Posterior cingulate gyrus (tissue), 11 donors: ENCODE measurements at regions of chr1 and their contacts with region 1.

Region 1: GRCh38 chr1:6613361-6614018 is at the start of gene PHF13:
- DNase-seq: peak; percentile 99 to 100 (median 100)

Region 2: DNA sequence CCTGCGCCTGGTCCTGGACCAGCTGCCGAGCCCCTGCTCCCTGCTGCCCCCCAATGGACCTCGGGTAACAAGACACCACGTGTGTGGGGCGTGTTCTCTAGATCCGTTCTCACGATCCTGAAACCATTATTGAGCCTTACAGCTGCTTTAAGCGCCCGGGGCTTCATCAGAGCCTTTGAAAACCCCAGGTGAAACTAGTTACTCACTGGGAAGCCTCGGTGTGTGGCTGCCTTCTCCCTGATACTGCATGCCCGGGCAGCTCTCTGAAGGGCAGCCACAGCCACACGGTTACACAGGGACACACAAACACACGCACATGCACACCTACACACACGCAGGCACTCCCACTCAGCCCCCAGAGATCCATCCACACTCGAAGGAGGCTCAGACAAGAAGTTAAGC is 199.0 kb before region 1 on chr1:
- intact Hi-C with region 1: no loop called
- DNase-seq: peak in 5 of 10 donors; percentile 24 to 83 (median 35)

Region 3: DNA sequence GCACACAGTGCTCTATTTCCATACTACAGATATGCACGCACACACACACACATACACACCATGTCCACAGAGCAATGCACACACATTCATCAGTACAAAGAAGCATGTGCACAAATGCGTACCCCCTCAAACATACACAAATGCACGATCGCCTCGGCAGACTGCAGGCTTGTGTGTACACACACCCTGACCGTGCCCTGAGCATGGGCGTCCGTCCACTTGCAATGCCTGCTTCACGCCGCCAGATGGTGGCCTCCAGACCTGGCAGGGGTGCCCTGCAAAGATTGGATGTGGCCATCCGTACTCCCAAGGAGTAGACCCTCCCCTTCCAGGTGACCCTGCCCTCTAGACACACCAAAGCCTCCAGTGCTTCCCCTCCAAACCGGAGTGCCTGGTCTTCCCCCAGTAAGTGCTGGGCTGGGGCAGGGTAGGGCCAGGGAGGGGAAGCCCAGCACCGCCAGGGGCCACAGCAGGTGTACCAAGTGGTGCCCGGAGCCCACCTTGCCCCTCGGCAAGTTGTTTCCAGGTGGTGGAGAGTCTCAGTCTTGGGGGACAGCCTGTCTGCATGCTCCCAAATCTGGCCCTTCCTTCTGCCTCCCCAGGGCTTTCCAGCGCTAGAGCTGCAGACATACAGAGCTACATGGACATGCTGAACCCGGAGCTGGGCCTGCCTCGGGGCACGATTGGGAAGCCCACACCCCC is 168.3 kb before region 1 on chr1:
- intact Hi-C with region 1: no loop called
- DNase-seq: peak in 4 of 10 donors; percentile 26 to 89 (median 27)

Region 4: DNA sequence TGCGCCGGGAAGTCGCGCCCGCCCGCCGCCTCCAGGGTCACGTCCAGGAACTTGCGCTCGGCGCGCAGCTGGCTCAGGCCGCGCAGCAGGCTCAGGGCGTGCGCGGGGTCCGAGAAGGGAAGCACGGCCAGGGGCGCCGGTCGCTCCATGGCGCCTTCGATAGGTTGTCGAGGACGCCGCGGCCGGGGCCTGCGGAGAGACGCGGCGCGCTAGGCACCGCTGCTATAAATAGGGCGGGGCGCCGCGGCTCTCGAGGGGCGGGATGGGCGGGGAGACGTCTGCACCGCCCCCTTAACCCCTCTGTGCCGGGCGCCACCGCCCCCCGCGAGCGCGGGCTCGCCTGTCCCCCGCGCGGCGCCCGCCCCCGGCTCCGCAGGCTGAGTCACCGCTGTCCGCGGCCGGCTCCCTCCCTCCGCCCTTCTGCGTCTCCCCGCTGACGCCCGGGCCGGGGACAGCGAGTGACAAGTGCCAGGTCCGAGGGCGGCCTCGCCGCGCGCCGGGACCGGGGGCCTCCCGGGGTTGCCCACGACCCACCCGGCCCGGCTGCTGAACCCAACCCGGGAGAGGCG is 10.7 kb before region 1 on chr1 and contains the start of gene KLHL21:
- intact Hi-C with region 1: loop called (anchors 1 kb)
- DNase-seq: peak; percentile 76 to 99 (median 90)

Region 5: DNA sequence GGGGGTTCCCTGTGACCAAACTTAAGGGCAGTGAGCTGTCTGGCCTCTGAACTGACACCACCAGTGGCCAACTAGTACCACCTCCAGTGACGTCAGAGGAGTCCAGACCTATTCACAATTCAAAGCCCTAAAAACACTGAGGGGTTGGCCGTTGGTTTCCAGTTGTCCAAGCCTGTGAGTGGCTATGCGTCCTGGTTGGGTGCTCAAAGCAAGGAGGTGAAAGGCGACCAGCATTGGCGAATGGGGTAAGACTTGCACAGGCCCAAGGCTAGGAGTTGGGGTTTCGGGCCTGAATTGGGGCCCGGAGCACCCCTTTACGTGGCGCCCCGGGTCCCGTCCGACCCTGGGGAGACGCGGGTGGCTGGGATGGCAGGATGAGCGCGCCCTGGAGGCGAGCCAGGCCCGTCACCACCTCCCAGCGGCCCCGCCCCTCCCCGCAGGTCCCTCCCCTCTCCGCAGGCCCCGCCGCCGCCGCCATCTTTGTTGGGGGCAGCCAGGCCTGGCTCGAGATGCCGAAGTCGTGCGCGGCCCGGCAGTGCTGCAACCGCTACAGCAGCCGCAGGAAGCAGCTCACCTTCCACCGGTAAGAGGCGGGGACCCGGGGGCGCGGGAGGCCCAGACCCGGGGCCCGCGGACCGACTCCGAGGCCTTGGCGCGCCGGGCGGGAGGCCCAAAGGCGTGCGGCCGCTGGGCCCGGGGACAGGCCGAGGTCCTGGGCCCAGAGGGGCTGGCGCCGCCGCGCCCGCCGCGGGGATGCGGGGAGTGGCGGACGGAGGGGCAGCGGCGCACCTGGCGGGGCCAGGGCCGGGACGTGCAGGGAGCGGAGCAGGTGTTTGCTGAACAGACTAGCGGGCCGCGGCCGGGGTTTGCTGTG is 11.5 kb after region 1 on chr1 and contains the start of gene THAP3:
- intact Hi-C with region 1: loop called (anchors 1 kb)
- DNase-seq: peak; percentile 69 to 97 (median 82)

Region 6: GRCh38 chr1:6743189-6744101 is 130.0 kb after region 1 on chr1:
- intact Hi-C with region 1: no loop called
- DNase-seq: peak in 4 of 10 donors; percentile 4 to 83 (median 20)

Region 7: DNA sequence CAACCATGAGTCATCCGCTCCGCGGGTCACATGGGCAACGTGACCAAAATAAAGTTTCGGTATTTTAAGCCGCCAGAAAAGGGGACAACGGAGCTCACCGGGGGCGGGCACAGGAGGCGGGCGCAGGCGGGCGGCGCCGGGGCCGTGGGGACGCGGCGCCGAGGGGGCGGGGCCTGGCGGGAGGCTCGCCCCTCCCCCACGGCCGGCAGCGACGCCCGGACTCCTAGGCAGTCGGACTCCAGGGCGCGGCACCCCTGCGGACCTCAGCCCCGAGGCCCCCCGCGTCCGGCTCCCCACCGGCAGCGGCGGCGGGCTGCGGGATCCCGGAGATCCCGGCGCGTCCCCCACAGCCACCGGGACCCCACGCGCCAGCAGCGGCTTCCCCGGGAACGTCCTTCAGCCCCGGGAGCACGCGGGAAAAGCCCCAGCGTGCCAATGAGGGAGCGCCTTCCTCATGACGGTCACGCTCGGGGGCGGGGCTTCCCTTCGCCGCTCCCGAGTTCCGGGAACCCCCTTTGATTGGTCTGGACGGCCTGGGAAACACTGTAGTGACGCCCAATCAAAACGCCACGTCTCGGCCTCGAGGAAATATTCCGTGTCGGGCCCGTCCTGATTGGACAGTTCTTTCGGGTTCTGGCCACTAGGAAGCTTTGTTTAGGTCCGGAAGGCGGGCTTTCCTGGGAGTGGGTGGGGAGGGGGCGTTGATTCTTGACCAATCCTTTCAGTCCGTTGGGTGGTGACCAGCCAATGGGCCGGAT is 171.2 kb after region 1 on chr1:
- intact Hi-C with region 1: loop called (anchors 10 kb)
- DNase-seq: peak; percentile 99 to 100 (median 100)